MCF 10A (cell line): ENCODE measurements at regions of chr3 and their contacts with region 1.

Region 1: DNA sequence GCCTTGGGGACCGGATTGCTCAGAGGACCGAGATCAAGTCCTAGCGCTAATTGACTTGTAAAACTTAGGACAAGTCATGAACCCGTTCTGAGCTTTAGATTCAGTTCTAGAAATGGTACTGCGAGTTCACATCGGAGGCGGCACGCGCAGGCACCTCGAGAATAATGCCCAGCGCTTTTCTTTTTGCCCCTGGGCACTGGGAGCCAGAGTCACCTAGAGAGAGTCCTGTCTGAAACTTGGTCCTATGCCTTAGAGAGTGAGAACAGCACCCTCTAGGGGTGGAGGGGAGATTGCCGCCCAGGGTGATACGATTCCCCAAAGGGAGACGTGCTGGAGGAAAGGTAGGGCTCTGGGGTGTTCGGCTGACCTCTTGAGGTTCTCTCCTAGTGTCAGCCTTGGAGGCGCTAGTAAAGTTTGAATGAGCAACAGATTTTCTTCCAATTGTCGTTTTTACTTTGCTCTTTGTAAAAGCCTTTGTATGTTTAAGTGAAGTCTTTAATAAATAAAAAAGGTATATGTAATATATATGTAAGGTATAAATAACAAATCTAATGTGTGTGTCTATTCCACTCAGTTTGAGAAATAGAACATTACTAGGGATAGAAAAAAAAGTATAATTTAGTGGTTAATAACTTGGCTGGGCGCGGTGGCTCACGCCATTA is 826 bp downstream of the EEF1AKMT4 start:
- DNase-seq: peak; percentile 97
- H3K4me3 Mint-ChIP-seq: peak overlapping the region; percentile 97
- H3K27ac Mint-ChIP-seq: peak overlapping the region; percentile 82
- H3K4me1 Mint-ChIP-seq: peaks cover 9% of the 10 kb centered on the region
- H3K27me3 Mint-ChIP-seq: no peaks in the 10 kb centered on the region
- CTCF ChIP-seq: peak; percentile 80

Region 2: GRCh38 chr3:183904833-183905780 is 345.2 kb before region 1 on chr3:
- CTCF ChIA-PET with region 1: interaction called, 3 read pairs
- POLR2A ChIA-PET with region 1: no interaction called
- intact Hi-C with region 1: loop called (anchors 1 kb)
- DNase-seq: no peak
- H3K4me3 Mint-ChIP-seq: no peak overlapping the region
- H3K27ac Mint-ChIP-seq: no peak overlapping the region
- H3K4me1 Mint-ChIP-seq: no peaks in the 10 kb centered on the region
- H3K27me3 Mint-ChIP-seq: no peaks in the 10 kb centered on the region
- CTCF ChIP-seq: no peak

Region 3: DNA sequence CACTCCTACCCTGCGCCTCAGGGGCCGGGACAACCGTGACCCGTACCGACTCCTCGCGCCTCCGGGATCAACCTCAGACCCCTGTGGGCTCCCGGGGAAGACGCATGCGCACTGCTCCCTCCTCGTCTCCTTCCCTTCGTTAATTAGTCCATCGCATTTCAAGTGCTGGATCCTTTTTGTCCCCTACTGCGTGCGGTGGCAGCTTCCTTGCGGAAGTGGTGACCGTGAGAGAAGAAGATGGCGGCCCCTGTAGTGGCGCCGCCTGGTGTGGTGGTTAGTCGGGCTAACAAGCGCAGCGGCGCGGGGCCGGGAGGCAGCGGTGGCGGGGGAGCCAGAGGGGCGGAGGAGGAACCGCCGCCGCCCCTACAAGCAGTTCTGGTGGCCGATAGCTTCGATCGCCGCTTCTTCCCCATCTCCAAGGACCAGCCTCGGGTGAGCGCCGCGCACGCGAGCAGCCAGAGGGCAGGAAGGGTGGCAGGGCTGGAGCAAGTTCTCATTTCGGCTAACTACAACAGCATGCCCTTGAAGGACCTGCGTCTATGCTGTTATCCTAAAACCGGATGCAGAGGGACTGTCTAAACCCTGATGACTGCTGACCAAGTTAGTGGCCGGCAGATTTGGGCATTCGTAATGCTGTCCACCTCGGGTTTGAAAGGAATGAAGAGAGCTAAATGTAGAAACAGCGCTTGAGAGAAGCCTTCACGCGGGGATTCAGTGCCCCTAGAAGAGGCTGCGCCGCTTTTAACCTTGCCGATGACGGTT is 115.0 kb before region 1 on chr3 and contains the start of gene EIF2B5:
- CTCF ChIA-PET with region 1: interaction called, 3 read pairs
- POLR2A ChIA-PET with region 1: interaction called, 11 read pairs
- intact Hi-C with region 1: no loop called
- DNase-seq: peak; percentile 93
- H3K4me3 Mint-ChIP-seq: peak within 1 kb of the TSS; percentile 99
- H3K27ac Mint-ChIP-seq: peak within 1 kb of the TSS; percentile 83
- H3K4me1 Mint-ChIP-seq: peaks cover 21% of the 10 kb centered on the region
- H3K27me3 Mint-ChIP-seq: no peaks in the 10 kb centered on the region
- CTCF ChIP-seq: peak; percentile 22
- total RNA-seq, gene EIF2B5: 33.8 and 36.1 TPM in 2 replicates

Region 4: DNA sequence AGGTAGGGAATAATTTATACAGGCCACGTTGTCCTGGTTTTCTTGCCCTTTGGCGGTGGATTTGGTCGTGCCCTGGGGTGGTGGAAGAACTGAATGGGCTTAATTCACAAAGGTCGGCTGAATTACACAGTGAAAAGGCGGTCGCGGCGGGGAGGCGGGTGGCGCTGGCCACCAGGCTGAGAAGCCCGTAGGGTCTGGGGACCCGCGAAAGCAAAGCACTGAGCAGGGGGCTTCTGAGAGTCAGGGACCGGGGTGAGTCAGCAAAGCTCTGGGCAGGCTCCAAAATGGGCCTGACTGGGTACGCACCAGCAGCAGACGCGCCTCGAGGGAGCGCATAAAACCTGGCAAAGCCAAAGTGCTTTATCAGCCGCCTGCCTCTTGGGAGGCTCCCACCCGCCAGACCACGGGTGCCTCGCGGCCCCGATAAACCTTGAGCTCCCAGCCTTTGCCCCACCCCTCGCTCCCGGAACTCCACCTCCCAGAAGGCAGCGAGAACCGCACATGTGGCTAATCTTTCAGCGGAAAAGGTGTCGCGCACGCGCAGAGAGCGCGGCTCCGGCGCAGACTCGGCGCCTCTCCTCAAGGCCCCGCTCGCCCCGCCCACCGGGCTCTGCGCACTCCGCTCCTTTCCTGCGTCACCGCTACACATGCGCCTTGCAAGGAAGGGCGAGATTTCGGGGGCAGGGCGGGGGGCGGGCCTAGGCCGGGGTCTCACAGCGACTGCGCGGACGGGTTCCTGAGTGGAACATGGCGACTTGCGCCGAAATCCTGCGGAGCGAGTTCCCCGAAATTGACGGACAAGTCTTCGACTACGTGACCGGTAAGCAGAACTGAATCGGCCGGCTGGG is 64.6 kb before region 1 on chr3 and contains the start of gene ABCF3:
- CTCF ChIA-PET with region 1: interaction called, 4 read pairs
- POLR2A ChIA-PET with region 1: interaction called, 6 read pairs
- intact Hi-C with region 1: loop called (anchors 1 kb)
- DNase-seq: peak; percentile 98
- H3K4me3 Mint-ChIP-seq: peak within 1 kb of the TSS; percentile 95
- H3K27ac Mint-ChIP-seq: peak within 1 kb of the TSS; percentile 93
- H3K4me1 Mint-ChIP-seq: peaks cover 19% of the 10 kb centered on the region
- H3K27me3 Mint-ChIP-seq: no peaks in the 10 kb centered on the region
- CTCF ChIP-seq: no peak
- total RNA-seq, gene ABCF3: 62.7 and 73.9 TPM in 2 replicates

Region 5: GRCh38 chr3:184261270-184261853 is 11.1 kb after region 1 on chr3 and contains the start of gene CAMK2N2:
- CTCF ChIA-PET with region 1: interaction called, 8 read pairs
- POLR2A ChIA-PET with region 1: interaction called, 11 read pairs
- intact Hi-C with region 1: no loop called
- DNase-seq: peak; percentile 72
- H3K4me3 Mint-ChIP-seq: peak within 1 kb of the TSS; percentile 79
- H3K27ac Mint-ChIP-seq: peak within 1 kb of the TSS; percentile 7
- H3K4me1 Mint-ChIP-seq: peaks cover 16% of the 10 kb centered on the region
- H3K27me3 Mint-ChIP-seq: no peaks in the 10 kb centered on the region
- CTCF ChIP-seq: no peak
- total RNA-seq, gene CAMK2N2: 6.1 TPM in 2 replicates

Region 6: DNA sequence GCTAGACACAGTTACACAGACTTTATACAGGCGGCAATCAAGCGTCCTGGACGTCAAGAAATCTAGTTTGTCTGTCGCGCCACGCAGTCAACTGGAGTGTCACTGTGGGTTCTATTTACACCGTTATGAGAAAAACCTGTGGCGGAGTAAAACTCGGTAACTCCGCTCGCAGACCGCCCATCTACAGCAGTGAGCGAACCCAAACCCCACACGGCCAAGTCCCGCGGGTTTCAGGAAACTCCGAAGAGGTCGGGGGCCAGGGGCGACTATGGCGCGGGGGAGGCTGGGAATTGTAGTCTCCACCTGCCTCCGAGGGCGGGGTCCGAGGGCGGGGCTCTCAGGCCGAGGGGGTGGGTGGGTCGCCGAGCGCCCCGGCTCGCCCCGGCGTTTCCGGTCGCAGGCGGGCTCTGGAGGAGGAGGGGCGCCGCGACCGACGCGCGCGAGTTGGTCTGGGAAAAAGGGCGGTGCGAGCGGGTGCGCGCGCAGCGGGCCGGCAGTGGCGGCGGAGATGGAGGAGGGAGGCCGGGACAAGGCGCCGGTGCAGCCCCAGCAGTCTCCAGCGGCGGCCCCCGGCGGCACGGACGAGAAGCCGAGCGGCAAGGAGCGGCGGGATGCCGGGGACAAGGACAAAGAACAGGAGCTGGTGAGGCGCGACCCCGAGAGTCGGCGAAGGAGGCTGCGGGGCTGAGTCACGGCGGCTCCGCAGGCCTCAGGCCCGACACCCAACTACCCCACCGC is 48.6 kb after region 1 on chr3 and contains the start of gene PSMD2:
- CTCF ChIA-PET with region 1: interaction called, 6 read pairs
- POLR2A ChIA-PET with region 1: interaction called, 6 read pairs
- intact Hi-C with region 1: loop called (anchors 1 kb)
- DNase-seq: peak; percentile 96
- H3K4me3 Mint-ChIP-seq: peak within 1 kb of the TSS; percentile 83
- H3K27ac Mint-ChIP-seq: peak within 1 kb of the TSS; percentile 82
- H3K4me1 Mint-ChIP-seq: peaks cover 5% of the 10 kb centered on the region
- H3K27me3 Mint-ChIP-seq: no peaks in the 10 kb centered on the region
- CTCF ChIP-seq: no peak
- total RNA-seq, gene PSMD2: 275 and 284 TPM in 2 replicates